IMR-90 (cell line): ENCODE measurements at regions of chr3 and their contacts with region 1.

Region 1: GRCh38 chr3:42101048-42101447 is 9.9 kb downstream of the TRAK1 start:
- DNase-seq: peak; percentile 79
- ATAC-seq: peak; percentile 74
- H3K4me3 ChIP-seq: no peak overlapping the region
- H3K27ac ChIP-seq: peak overlapping the region; percentile 55; the same call in 1 of the 2 replicates
- H3K4me1 ChIP-seq: peaks cover 21% of the 10 kb centered on the region
- H3K27me3 ChIP-seq: no peaks in the 10 kb centered on the region
- CTCF ChIP-seq: no peak
- POLR2A ChIP-seq: no peak
- RAD21 ChIP-seq: no peak

Region 2: DNA sequence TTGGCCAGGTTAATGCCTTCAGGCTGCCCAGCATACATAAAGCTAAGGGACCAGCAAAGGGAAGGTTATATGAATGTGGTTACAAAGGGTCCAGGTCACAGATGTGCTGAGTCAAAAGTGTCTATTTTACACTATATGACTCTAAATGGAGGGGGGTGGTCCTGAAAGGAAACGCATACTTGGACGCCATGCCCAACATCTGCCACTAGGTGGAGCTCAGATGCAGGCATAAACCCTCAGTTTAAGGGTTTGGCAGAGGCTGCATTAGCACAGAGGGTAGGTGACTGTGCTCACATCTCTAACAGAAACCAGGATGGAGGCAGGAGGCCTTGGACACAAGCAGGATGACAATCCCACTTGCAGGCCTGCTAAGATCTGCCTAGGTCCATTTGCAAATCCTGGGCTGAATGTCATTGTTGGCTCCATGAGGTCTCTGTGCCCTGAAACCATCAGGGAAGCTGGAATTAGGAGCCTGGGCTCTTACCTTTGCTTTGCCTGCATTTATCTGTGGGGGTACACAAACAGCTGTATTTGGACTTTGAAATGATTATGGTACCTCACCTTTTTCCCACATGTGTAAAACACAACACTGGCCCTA is 1520.5 kb before region 1 on chr3:
- CTCF ChIA-PET with region 1: no interaction called
- POLR2A ChIA-PET with region 1: no interaction called
- dilution Hi-C with region 1: no loop called
- in situ Hi-C with region 1: no loop called
- intact Hi-C with region 1: loop called (anchors 2 kb)
- DNase-seq: peak; percentile 60
- ATAC-seq: peak; percentile 86
- H3K4me3 ChIP-seq: no peak overlapping the region
- H3K27ac ChIP-seq: no peak overlapping the region
- H3K4me1 ChIP-seq: no peaks in the 10 kb centered on the region
- H3K27me3 ChIP-seq: peaks cover 10% of the 10 kb centered on the region; the same call in 1 of the 2 replicates
- CTCF ChIP-seq: peak; percentile 84
- POLR2A ChIP-seq: no peak
- RAD21 ChIP-seq: peak; percentile 90

Region 3: DNA sequence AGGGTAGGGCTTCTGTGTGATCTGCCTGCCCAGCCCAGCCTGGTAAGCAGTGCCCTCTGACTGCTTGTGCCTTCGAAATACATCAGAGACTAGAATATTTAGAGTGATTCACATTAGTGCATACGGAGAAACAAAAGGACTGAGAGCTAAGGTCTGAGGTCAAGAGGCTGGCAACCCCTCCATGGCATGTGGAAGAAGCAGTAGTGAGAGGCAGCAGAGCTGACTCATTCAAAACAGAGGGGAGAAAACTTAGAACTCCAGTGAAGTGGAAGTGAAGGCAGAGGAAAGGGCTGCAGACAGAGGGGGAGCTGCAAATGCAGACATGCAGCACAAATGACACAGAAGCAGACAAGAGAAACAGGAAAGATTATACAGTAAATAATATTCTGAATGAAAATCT is 200.8 kb before region 1 on chr3:
- CTCF ChIA-PET with region 1: interaction called, 12 read pairs
- POLR2A ChIA-PET with region 1: no interaction called
- dilution Hi-C with region 1: no loop called
- in situ Hi-C with region 1: no loop called
- intact Hi-C with region 1: no loop called
- DNase-seq: peak; percentile 44
- ATAC-seq: no peak
- H3K4me3 ChIP-seq: no peak overlapping the region
- H3K27ac ChIP-seq: no peak overlapping the region
- H3K4me1 ChIP-seq: peaks cover 3% of the 10 kb centered on the region; the same call in 1 of the 2 replicates
- H3K27me3 ChIP-seq: no peaks in the 10 kb centered on the region
- CTCF ChIP-seq: no peak
- POLR2A ChIP-seq: no peak
- RAD21 ChIP-seq: no peak

Region 4: GRCh38 chr3:42012935-42013690 is 87.9 kb before region 1 on chr3:
- CTCF ChIA-PET with region 1: interaction called, 4 read pairs
- POLR2A ChIA-PET with region 1: no interaction called
- dilution Hi-C with region 1: no loop called
- in situ Hi-C with region 1: loop called (anchors 5 kb)
- intact Hi-C with region 1: loop called (anchors 1 kb)
- DNase-seq: peak; percentile 51
- ATAC-seq: peak; percentile 95
- H3K4me3 ChIP-seq: peak overlapping the region; percentile 95
- H3K27ac ChIP-seq: peak overlapping the region; percentile 22; the same call in 1 of the 2 replicates
- H3K4me1 ChIP-seq: peaks cover 8% of the 10 kb centered on the region
- H3K27me3 ChIP-seq: no peaks in the 10 kb centered on the region
- CTCF ChIP-seq: 0 out of 2 replicates have a peak, but pooled peaks have one; percentile 8
- POLR2A ChIP-seq: no peak
- RAD21 ChIP-seq: no peak; the same call in 1 of the 2 replicates

Region 5: GRCh38 chr3:42032693-42033349 is 68.2 kb before region 1 on chr3:
- CTCF ChIA-PET with region 1: no interaction called
- POLR2A ChIA-PET with region 1: no interaction called
- dilution Hi-C with region 1: no loop called
- in situ Hi-C with region 1: no loop called
- intact Hi-C with region 1: loop called (anchors 5 kb)
- DNase-seq: peak; percentile 98
- ATAC-seq: peak; percentile 84
- H3K4me3 ChIP-seq: no peak overlapping the region
- H3K27ac ChIP-seq: peak overlapping the region; percentile 79; the same call in 1 of the 2 replicates
- H3K4me1 ChIP-seq: peaks cover 45% of the 10 kb centered on the region
- H3K27me3 ChIP-seq: no peaks in the 10 kb centered on the region
- CTCF ChIP-seq: no peak
- POLR2A ChIP-seq: no peak
- RAD21 ChIP-seq: peak; percentile 30; the same call in 1 of the 2 replicates